ENCODE measurements at regions of chr11 and their contacts with region 1.

Region 1: DNA sequence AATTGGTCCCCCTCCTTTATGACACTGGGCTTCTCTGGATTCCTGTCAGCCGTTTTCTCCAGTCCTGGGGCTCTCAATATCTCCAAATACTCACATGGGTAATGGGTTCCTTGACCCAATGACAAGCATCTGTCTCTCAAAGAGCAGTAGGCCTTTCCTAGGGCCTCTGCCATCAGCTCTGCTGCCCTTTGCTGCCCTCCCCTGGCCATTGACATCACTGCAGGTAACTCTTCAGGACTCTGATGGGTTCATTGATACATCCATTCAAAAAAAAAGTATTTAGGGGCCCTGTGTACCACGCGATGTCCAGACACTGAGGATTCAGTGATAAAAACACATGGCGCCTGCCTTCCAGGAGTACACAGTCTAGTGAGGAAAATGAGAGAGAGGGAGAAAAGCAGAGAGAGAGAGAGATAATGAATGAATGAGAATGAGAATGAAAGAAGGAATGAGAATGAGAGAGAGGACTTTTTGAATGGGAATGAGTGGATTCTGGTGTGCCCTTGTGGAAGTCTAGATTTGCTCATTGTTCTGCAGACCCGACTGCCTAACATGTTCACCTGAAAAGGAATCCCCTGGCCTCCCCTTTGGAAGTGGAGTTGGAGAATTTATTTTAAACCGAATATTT is 42.6 kb upstream of the OLFML1 start:
- DNase-seq: peak; percentile 41 to 71 (median 48)
- H3K4me3 ChIP-seq: no peak overlapping the region
- H3K4me3 Mint-ChIP-seq: no peak overlapping the region
- H3K27ac ChIP-seq: no peak overlapping the region
- H3K27ac Mint-ChIP-seq: no peak overlapping the region
- H3K4me1 ChIP-seq: no peaks in the 10 kb centered on the region
- H3K4me1 Mint-ChIP-seq: peaks cover 0 to 8% (median 0%) of the 10 kb centered on the region in 3 donors
- H3K27me3 ChIP-seq: no peaks in the 10 kb centered on the region
- H3K27me3 Mint-ChIP-seq: peaks cover 8 to 10% of the 10 kb centered on the region in 2 donors

Region 2: GRCh38 chr11:7098235-7098832 is 344.4 kb before region 1 on chr11:
- CTCF ChIA-PET with region 1: interaction called, 16 read pairs
- POLR2A ChIA-PET with region 1: no interaction called
- DNase-seq: peak in 2 of 5 donors; percentile 24 to 29
- H3K4me3 ChIP-seq: no peak overlapping the region
- H3K4me3 Mint-ChIP-seq: no peak overlapping the region
- H3K27ac ChIP-seq: no peak overlapping the region
- H3K27ac Mint-ChIP-seq: no peak overlapping the region
- H3K4me1 ChIP-seq: no peaks in the 10 kb centered on the region
- H3K4me1 Mint-ChIP-seq: no peaks in the 10 kb centered on the region
- H3K27me3 ChIP-seq: no peaks in the 10 kb centered on the region
- H3K27me3 Mint-ChIP-seq: peaks cover 2 to 38% of the 10 kb centered on the region in 2 donors

Region 3: GRCh38 chr11:7454855-7455254 is 12.2 kb after region 1 on chr11:
- CTCF ChIA-PET with region 1: interaction called, 17 read pairs
- POLR2A ChIA-PET with region 1: no interaction called
- DNase-seq: no peak
- H3K4me3 ChIP-seq: no peak overlapping the region
- H3K4me3 Mint-ChIP-seq: no peak overlapping the region
- H3K27ac ChIP-seq: no peak overlapping the region
- H3K27ac Mint-ChIP-seq: no peak overlapping the region
- H3K4me1 ChIP-seq: no peaks in the 10 kb centered on the region
- H3K4me1 Mint-ChIP-seq: no peaks in the 10 kb centered on the region
- H3K27me3 ChIP-seq: no peaks in the 10 kb centered on the region
- H3K27me3 Mint-ChIP-seq: peaks cover 0 to 2% of the 10 kb centered on the region in 2 donors

Region 4: DNA sequence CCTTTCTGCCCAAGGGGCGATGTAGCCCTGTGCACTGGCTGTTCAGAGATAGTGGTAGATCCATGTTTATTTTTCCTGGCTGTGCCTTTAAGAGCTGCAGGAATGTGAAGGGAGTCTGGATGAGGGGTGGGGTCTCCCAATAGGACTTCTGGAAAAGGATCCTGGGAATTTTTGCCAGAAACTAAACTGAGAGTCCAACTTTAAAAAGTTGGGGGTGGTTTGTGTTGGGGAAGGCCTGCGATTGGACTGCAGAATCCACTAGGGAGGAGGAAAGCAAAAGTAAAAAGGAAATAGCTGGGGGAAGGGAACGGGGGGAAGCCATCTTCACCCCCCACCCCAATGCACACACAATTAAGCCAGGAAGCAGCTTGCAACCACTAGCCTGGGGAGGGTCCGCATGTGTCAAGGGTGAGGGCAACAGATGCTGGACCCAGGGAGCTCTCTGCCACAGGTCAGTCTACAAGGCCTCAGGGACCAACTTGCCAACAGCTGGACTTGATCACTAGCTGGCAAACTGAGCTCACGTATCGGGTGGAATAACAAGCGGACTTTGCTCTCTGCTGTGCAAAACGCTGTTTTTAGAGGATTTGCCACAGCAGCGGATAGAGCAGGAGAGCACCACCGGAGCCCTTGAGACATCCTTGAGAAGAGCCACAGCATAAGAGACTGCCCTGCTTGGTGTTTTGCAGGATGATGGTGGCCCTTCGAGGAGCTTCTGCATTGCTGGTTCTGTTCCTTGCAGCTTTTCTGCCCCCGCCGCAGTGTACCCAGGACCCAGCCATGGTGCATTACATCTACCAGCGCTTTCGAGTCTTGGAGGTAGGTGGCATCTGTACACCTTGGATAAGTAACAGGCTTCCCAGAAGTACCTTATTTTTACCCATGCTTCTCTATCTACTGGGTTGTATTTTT is 42.7 kb after region 1 on chr11 and contains the start of gene OLFML1:
- CTCF ChIA-PET with region 1: no interaction called
- POLR2A ChIA-PET with region 1: no interaction called
- DNase-seq: no peak
- H3K4me3 ChIP-seq: no peak within 1 kb of the TSS
- H3K4me3 Mint-ChIP-seq: no peak within 1 kb of the TSS
- H3K27ac ChIP-seq: no peak within 1 kb of the TSS
- H3K27ac Mint-ChIP-seq: no peak within 1 kb of the TSS
- H3K4me1 ChIP-seq: no peaks in the 10 kb centered on the region
- H3K4me1 Mint-ChIP-seq: no peaks in the 10 kb centered on the region
- H3K27me3 ChIP-seq: no peaks in the 10 kb centered on the region
- H3K27me3 Mint-ChIP-seq: peaks cover 7 to 17% of the 10 kb centered on the region in 2 donors
- total RNA-seq, gene OLFML1: not detected

Measured in CD8-positive, alpha-beta memory T cell (primary cell).